Pancreas (tissue), 10 donors: ENCODE measurements at regions of chr14 and their contacts with region 1.

Region 1: GRCh38 chr14:29548948-29549370 is 378.7 kb downstream of the PRKD1 start:
- DNase-seq: peak in 1 of 6 donors; percentile 16
- ATAC-seq: peak in 3 of 4 donors; percentile 84 to 89 (median 88)
- H3K4me3 ChIP-seq: no peak overlapping the region
- H3K27ac ChIP-seq: no peak overlapping the region
- H3K4me1 ChIP-seq: no peaks in the 10 kb centered on the region
- H3K27me3 ChIP-seq: no peaks in the 10 kb centered on the region
- CTCF ChIP-seq: peak; percentile 14 to 41 (median 30)

Region 2: GRCh38 chr14:29370024-29370423 is 178.9 kb before region 1 on chr14:
- intact Hi-C with region 1: no loop called
- DNase-seq: no peak
- ATAC-seq: no peak
- H3K4me3 ChIP-seq: no peak overlapping the region
- H3K27ac ChIP-seq: no peak overlapping the region
- H3K4me1 ChIP-seq: no peaks in the 10 kb centered on the region
- H3K27me3 ChIP-seq: no peaks in the 10 kb centered on the region
- CTCF ChIP-seq: no peak

Region 3: GRCh38 chr14:29724991-29725390 is 176.0 kb after region 1 on chr14:
- intact Hi-C with region 1: no loop called
- DNase-seq: peak in 4 of 6 donors; percentile 40 to 78 (median 58)
- ATAC-seq: peak; percentile 94 to 96 (median 96)
- H3K4me3 ChIP-seq: no peak overlapping the region
- H3K27ac ChIP-seq: peak overlapping the region in 3 of 4 donors; percentile 2 to 33 (median 18)
- H3K4me1 ChIP-seq: peaks cover 7 to 28% (median 19%) of the 10 kb centered on the region in 3 donors
- H3K27me3 ChIP-seq: no peaks in the 10 kb centered on the region
- CTCF ChIP-seq: no peak

Region 4: GRCh38 chr14:30005114-30005808 is 456.3 kb after region 1 on chr14:
- intact Hi-C with region 1: loop called in 2 of 3 experiments (anchors 5 to 10 kb)
- DNase-seq: peak in 1 of 6 donors; percentile 11
- ATAC-seq: peak; percentile 72 to 95 (median 92)
- H3K4me3 ChIP-seq: no peak overlapping the region
- H3K27ac ChIP-seq: no peak overlapping the region
- H3K4me1 ChIP-seq: no peaks in the 10 kb centered on the region
- H3K27me3 ChIP-seq: no peaks in the 10 kb centered on the region
- CTCF ChIP-seq: peak; percentile 33 to 68 (median 64)

Region 5: GRCh38 chr14:30214461-30215090 is 665.6 kb after region 1 on chr14:
- intact Hi-C with region 1: loop called in 1 of 3 experiments (anchors 10 kb)
- DNase-seq: peak in 1 of 6 donors; percentile 19
- ATAC-seq: peak; percentile 66 to 87 (median 82)
- H3K4me3 ChIP-seq: no peak overlapping the region
- H3K27ac ChIP-seq: no peak overlapping the region
- H3K4me1 ChIP-seq: no peaks in the 10 kb centered on the region
- H3K27me3 ChIP-seq: peaks cover 0 to 3% (median 0%) of the 10 kb centered on the region in 4 donors
- CTCF ChIP-seq: peak in 3 of 4 donors; percentile 33 to 41 (median 35)